ENCODE measurements at regions of chr7 and their contacts with region 1.

Region 1: GRCh38 chr7:23546897-23547572 is 15.3 kb upstream of the TRA2A start:
- DNase-seq: peak; percentile 86
- ATAC-seq: peak; percentile 93
- H3K4me3 Mint-ChIP-seq: no peak overlapping the region
- H3K27ac Mint-ChIP-seq: no peak overlapping the region
- H3K4me1 Mint-ChIP-seq: peaks cover 11% of the 10 kb centered on the region
- H3K27me3 Mint-ChIP-seq: peaks cover 5% of the 10 kb centered on the region

Region 2: DNA sequence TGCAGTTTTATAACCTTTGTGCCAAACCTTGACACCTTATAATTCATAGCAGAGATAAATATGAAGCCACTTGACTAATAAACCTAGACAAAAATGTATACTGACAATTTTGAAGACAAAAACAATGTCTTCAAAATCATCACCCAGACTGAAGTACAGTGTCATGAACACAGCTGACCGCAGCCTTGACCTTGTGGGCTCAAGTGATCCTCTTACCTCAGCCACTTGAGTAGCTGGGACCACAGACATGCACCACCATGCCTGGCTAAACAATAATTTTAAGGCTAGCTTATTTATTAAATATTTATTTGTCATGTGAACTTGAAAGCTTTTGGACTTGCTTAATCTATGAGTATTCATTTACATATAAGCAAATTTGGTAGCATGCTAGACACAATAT is 795.7 kb before region 1 on chr7:
- CTCF ChIA-PET with region 1: no interaction called
- DNase-seq: no peak
- ATAC-seq: no peak
- H3K4me3 Mint-ChIP-seq: no peak overlapping the region
- H3K27ac Mint-ChIP-seq: no peak overlapping the region
- H3K4me1 Mint-ChIP-seq: no peaks in the 10 kb centered on the region
- H3K27me3 Mint-ChIP-seq: peaks cover 31% of the 10 kb centered on the region

Region 3: DNA sequence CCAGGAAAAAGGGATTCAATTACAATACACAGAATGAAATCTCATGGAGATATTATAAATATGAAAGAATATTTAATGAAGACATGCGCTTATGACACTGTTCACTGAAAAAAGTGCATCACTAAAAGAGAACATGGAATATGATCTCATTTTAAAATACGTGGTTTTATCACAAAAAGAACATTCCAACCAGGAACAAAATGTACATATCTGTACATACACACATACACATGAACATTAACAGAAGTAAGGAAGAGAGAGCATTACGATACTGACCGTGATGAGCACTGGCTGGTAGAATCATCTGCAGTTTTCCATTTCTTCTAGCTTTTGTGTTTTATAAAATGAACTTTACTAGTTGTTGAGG is 116.2 kb before region 1 on chr7:
- CTCF ChIA-PET with region 1: interaction called, 26 read pairs
- DNase-seq: no peak
- ATAC-seq: no peak
- H3K4me3 Mint-ChIP-seq: no peak overlapping the region
- H3K27ac Mint-ChIP-seq: no peak overlapping the region
- H3K4me1 Mint-ChIP-seq: no peaks in the 10 kb centered on the region
- H3K27me3 Mint-ChIP-seq: peaks cover 47% of the 10 kb centered on the region

Region 4: DNA sequence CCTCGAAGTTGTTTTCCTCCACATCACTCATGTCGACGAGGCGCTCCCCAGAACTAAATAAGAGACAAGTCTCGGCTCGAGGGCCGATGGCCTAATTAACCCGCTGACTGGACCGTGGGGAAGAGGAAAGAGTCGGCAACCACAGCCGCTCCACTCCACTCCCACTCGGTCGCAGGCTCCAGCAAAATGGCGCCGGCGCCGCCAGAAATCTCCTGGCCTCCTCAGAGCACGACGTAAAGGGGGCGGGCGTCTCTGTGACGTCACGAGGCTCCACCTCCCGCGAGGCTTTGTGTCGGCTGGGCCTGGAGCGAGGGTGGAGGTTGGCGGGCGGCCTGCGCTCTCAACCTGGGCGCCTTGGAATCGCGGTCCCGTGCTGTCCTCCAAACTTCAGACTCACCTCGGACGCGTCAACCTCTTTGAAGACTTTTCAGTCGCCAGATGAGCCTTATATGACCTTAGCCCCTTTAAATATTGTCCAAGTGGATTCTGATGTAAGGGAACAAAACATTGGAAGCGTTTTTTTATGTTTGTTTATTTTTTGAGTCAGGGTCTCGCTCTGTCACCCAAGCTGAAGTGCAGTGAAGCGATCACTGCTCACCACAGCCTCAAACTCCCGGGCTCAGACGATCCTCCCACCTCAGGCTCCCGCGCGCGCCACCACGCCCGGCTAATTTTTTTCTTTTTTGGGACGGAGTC is 15.1 kb before region 1 on chr7 and contains the start of gene TRA2A:
- CTCF ChIA-PET with region 1: interaction called, 12 read pairs
- DNase-seq: peak; percentile 98
- ATAC-seq: peak; percentile 96
- H3K4me3 Mint-ChIP-seq: peak within 1 kb of the TSS; percentile 96
- H3K27ac Mint-ChIP-seq: peak within 1 kb of the TSS; percentile 100
- H3K4me1 Mint-ChIP-seq: peaks cover 35% of the 10 kb centered on the region
- H3K27me3 Mint-ChIP-seq: no peaks in the 10 kb centered on the region
- total RNA-seq, gene TRA2A: 108 to 113 TPM

Region 5: DNA sequence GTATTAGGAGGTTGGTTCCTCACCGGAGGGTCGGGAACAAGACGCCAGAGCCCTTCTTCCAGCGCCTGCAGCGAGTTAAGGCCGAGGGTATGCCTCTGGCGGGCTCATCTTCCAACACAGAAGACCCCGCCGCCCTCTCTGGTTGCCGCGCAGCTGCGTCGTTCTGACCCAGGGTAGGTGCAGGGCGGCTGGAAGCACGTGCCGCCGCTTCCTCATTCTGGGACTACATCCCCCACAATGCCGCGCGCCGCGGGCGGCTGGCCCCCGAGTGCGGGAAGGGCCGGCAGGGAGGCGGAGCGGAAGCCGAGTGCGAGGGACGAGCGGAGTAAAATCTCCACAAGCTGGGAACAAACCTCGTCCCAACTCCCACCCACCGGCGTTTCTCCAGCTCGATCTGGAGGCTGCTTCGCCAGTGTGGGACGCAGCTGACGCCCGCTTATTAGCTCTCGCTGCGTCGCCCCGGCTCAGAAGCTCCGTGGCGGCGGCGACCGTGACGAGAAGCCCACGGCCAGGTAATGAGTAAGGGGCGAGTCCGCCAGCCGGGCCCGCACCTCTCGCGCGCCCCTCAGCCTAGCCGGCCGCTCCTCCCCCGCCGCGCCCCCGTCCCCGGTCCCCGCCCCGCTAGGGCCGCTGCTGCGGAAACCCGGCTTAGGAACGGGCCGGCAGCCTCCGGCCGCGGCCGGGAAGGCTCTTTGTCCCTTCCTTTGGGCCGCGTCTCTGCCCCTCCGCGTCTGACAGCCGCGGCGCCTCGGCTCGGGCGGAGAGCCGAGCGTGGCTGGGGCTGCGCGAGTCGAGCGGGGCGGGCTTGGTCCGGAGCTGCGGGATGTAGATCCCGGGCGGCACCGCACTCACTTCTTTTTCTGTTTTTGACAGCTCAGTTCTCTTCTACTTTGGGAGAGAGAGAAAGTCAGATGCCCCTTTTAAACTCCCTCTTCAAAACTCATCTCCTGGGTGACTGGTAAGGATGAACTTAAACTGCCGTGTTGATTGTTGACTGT is 50.4 kb after region 1 on chr7 and contains the start of gene CCDC126:
- CTCF ChIA-PET with region 1: interaction called, 14 read pairs
- DNase-seq: peak; percentile 88
- ATAC-seq: peak; percentile 89
- H3K4me3 Mint-ChIP-seq: peak within 1 kb of the TSS; percentile 84
- H3K27ac Mint-ChIP-seq: peak within 1 kb of the TSS; percentile 52
- H3K4me1 Mint-ChIP-seq: peaks cover 54% of the 10 kb centered on the region
- H3K27me3 Mint-ChIP-seq: no peaks in the 10 kb centered on the region
- total RNA-seq, gene CCDC126: 8.0 to 8.1 TPM

Region 6: GRCh38 chr7:23662124-23662983 is 115.3 kb after region 1 on chr7:
- CTCF ChIA-PET with region 1: no interaction called
- DNase-seq: no peak
- ATAC-seq: no peak
- H3K4me3 Mint-ChIP-seq: no peak overlapping the region
- H3K27ac Mint-ChIP-seq: no peak overlapping the region
- H3K4me1 Mint-ChIP-seq: no peaks in the 10 kb centered on the region
- H3K27me3 Mint-ChIP-seq: no peaks in the 10 kb centered on the region

Region 7: DNA sequence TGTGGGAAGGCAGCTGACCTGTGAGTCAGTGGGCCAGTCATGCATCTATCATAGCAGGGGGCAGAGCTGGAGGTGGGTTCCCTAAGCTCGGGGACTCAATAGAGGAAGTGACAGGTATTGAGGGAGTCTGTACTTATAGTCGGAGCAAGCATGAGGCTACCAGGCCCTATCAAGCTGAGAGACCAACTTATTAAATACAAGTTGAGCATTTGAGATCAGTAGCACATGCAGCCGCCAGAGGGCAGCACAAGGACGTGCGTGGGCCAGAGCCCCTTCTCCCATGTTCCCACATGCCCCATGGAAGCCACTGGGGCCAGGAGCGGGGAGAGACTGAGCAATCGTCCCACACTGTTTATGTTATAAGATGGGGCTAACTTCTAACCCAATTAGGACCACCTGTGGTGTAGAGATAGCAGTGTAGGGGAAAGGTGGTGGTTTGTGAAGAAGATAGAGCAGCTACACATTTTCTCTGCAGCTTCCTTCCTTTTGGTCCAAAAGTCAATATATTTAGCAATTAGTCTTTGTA is 149.9 kb after region 1 on chr7:
- CTCF ChIA-PET with region 1: interaction called, 15 read pairs
- DNase-seq: peak; percentile 66
- ATAC-seq: peak; percentile 71
- H3K4me3 Mint-ChIP-seq: no peak overlapping the region
- H3K27ac Mint-ChIP-seq: no peak overlapping the region
- H3K4me1 Mint-ChIP-seq: peaks cover 3% of the 10 kb centered on the region
- H3K27me3 Mint-ChIP-seq: no peaks in the 10 kb centered on the region

Region 8: GRCh38 chr7:23712368-23713284 is 165.6 kb after region 1 on chr7:
- CTCF ChIA-PET with region 1: interaction called, 27 read pairs
- DNase-seq: no peak
- ATAC-seq: no peak
- H3K4me3 Mint-ChIP-seq: no peak overlapping the region
- H3K27ac Mint-ChIP-seq: no peak overlapping the region
- H3K4me1 Mint-ChIP-seq: no peaks in the 10 kb centered on the region
- H3K27me3 Mint-ChIP-seq: no peaks in the 10 kb centered on the region

Region 9: DNA sequence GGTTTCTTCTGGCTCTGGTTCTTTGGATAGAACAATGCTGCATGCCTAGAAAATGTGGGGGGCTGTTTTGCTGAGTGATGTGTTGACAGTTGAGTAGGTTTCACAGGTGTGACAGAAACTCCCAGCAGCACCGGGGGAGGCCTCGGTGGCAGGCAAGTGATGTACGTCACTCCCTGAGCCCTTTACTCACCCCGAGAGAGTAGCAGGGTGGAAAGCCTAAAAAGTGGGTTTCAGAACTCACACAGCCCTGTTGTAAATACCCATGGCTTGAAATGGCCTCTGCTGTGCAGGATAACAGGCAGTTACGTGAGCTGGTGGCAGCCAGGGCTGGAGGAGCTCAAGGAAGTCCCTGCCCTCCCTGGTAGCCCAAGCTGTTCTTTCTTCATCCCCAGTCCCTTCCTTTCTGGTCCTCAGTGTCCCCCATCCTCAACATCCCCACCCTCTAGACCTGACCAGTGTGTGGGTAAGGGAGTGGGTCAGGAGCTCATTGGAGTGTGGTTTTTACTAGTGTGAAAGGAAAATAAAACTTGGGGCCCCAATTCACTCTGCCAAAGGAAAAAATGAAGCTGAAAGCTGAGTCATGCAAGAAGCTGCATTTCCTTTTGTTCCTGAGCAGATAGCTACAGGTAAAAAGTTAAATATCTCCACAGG is 421.0 kb after region 1 on chr7:
- CTCF ChIA-PET with region 1: no interaction called
- DNase-seq: no peak
- ATAC-seq: no peak
- H3K4me3 Mint-ChIP-seq: no peak overlapping the region
- H3K27ac Mint-ChIP-seq: no peak overlapping the region
- H3K4me1 Mint-ChIP-seq: no peaks in the 10 kb centered on the region
- H3K27me3 Mint-ChIP-seq: no peaks in the 10 kb centered on the region